K562 (cell line): ENCODE measurements at regions of chr6 and their contacts with region 1.

Region 1: GRCh38 chr6:18155150-18155863 is at the start of gene KDM1B:
- DNase-seq: peak; percentile 99 to 100 (median 100)
- ATAC-seq: peak; percentile 96
- H3K4me3 ChIP-seq: peak within 1 kb of the TSS; percentile 74
- H3K27ac ChIP-seq: peak within 1 kb of the TSS; percentile 86
- H3K4me1 ChIP-seq: peaks cover 14 to 23% of the 10 kb centered on the region in 2 experiments
- H3K27me3 ChIP-seq: no peaks in the 10 kb centered on the region
- CTCF ChIP-seq: no peak
- EP300 ChIP-seq: no peak
- POLR2A ChIP-seq: no peak; the same call in 1 of the 2 replicates
- RAD21 ChIP-seq: no peak
- polyA plus RNA-seq, gene KDM1B: 1.4 to 1.7 TPM

Region 2: DNA sequence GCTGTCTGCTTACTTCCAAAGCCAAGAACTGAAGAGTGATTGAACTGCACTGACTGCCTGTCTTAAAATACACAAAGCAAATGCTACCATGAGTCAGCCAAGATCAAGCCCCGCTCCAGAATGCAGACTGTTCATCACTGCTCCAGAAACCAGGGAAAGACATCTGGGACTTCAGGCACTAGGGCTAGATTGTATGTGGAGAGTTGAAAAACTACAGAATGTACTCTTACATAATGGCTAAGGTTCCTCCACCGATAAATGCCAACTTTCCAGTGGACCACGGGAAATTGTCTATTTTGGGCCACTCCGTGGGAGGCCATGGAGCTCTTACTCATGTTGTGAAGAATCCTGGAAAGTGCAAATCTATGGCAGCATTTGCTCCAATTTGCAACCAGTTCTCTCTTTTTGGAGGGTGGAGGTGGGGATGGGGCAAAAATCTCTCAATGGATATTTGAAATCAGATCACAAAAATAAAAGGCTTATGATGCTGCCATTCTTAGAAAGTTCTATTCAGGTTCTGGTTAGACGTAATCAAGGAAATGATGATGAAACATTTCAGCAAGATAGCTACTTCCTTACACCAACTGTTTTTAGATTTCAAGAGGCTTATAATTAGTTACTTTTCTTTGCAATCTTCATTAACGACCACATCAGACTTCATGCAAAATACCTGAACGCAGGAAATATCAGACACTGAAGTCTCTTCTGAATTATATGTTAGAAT is 773.7 kb before region 1 on chr6:
- CTCF ChIA-PET with region 1: no interaction called
- POLR2A ChIA-PET with region 1: no interaction called
- in situ Hi-C with region 1: no loop called
- intact Hi-C with region 1: no loop called
- DNase-seq: no peak
- ATAC-seq: peak; percentile 39; the same call in 1 of the 3 replicates
- H3K4me3 ChIP-seq: no peak overlapping the region
- H3K27ac ChIP-seq: no peak overlapping the region
- H3K4me1 ChIP-seq: no peaks in the 10 kb centered on the region
- H3K27me3 ChIP-seq: peaks cover 0 to 12% of the 10 kb centered on the region in 2 experiments; a peak in 1 of 5 replicates
- CTCF ChIP-seq: no peak
- EP300 ChIP-seq: no peak
- POLR2A ChIP-seq: no peak
- RAD21 ChIP-seq: no peak

Region 3: GRCh38 chr6:18264219-18264922 is 109.1 kb after region 1 on chr6 and contains the start of gene DEK:
- CTCF ChIA-PET with region 1: no interaction called
- POLR2A ChIA-PET with region 1: no interaction called
- in situ Hi-C with region 1: no loop called
- intact Hi-C with region 1: loop called (anchors 5 kb)
- DNase-seq: peak; percentile 95 to 97 (median 96)
- ATAC-seq: peak; percentile 89
- H3K4me3 ChIP-seq: peak within 1 kb of the TSS; percentile 92
- H3K27ac ChIP-seq: peak within 1 kb of the TSS; percentile 97
- H3K4me1 ChIP-seq: peaks cover 21 to 36% of the 10 kb centered on the region in 2 experiments
- H3K27me3 ChIP-seq: no peaks in the 10 kb centered on the region
- CTCF ChIP-seq: peak; percentile 63 to 84 (median 76)
- EP300 ChIP-seq: no peak; the same call in 1 of the 2 replicates
- POLR2A ChIP-seq: peak; percentile 66; the same call in 1 of the 2 replicates
- RAD21 ChIP-seq: peak; percentile 60 to 61
- polyA plus RNA-seq, gene DEK: 82.3 to 87.3 TPM